ENCODE measurements at regions of chr5 and their contacts with region 1.

Region 1: DNA sequence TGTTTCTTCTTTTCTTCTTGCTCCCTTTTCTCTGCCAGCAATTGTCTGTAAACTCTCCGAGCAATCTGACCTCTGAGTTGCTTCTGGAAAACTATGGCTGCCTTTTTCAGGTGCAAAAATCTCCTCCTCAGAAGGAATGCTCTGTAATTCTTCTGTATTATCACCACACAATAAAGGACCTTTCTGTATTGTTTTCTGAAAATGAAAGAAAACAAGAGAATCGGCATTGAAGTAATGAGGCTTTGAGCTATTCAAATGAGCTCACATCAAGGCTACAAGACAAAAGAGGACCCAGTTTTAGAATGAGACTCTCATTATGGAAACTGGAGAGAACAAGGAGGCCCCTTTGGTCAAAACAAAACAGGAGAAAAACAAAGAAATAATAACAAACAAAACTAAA is 86.2 kb upstream of the RETREG1 start:
- DNase-seq: no peak
- H3K4me3 ChIP-seq: no peak overlapping the region
- H3K27ac ChIP-seq: no peak overlapping the region
- H3K4me1 ChIP-seq: no peaks in the 10 kb centered on the region
- H3K27me3 ChIP-seq: no peaks in the 10 kb centered on the region
- CTCF ChIP-seq: no peak

Region 2: GRCh38 chr5:14809369-14810155 is 1893.4 kb before region 1 on chr5:
- CTCF ChIA-PET with region 1: interaction called, 12 read pairs
- POLR2A ChIA-PET with region 1: no interaction called
- intact Hi-C with region 1: no loop called
- DNase-seq: peak; percentile 69 to 86
- H3K4me3 ChIP-seq: 0 out of 2 replicates have a peak overlapping the region, but pooled peaks have one; percentile 2
- H3K27ac ChIP-seq: peak overlapping the region; percentile 73
- H3K4me1 ChIP-seq: peaks cover 20% of the 10 kb centered on the region
- H3K27me3 ChIP-seq: no peaks in the 10 kb centered on the region
- CTCF ChIP-seq: no peak

Region 3: GRCh38 chr5:16558984-16559629 is 143.9 kb before region 1 on chr5:
- CTCF ChIA-PET with region 1: no interaction called
- POLR2A ChIA-PET with region 1: no interaction called
- intact Hi-C with region 1: no loop called
- DNase-seq: no peak
- H3K4me3 ChIP-seq: no peak overlapping the region
- H3K27ac ChIP-seq: no peak overlapping the region
- H3K4me1 ChIP-seq: no peaks in the 10 kb centered on the region
- H3K27me3 ChIP-seq: peaks cover 3% of the 10 kb centered on the region; the same call in 1 of the 2 replicates
- CTCF ChIP-seq: no peak

Region 4: GRCh38 chr5:16727755-16728325 is 24.9 kb after region 1 on chr5:
- CTCF ChIA-PET with region 1: no interaction called
- POLR2A ChIA-PET with region 1: interaction called, 13 read pairs
- intact Hi-C with region 1: no loop called
- DNase-seq: no peak
- H3K4me3 ChIP-seq: no peak overlapping the region
- H3K27ac ChIP-seq: no peak overlapping the region
- H3K4me1 ChIP-seq: no peaks in the 10 kb centered on the region
- H3K27me3 ChIP-seq: no peaks in the 10 kb centered on the region
- CTCF ChIP-seq: no peak

Region 5: GRCh38 chr5:17727191-17727590 is 1024.2 kb after region 1 on chr5:
- CTCF ChIA-PET with region 1: interaction called, 11 read pairs
- POLR2A ChIA-PET with region 1: no interaction called
- intact Hi-C with region 1: no loop called
- DNase-seq: no peak
- H3K4me3 ChIP-seq: no peak overlapping the region
- H3K27ac ChIP-seq: no peak overlapping the region
- H3K4me1 ChIP-seq: no peaks in the 10 kb centered on the region
- H3K27me3 ChIP-seq: peaks cover 19% of the 10 kb centered on the region; the same call in 1 of the 2 replicates
- CTCF ChIP-seq: no peak